Right ventricle myocardium superior (tissue), 1 donor: ENCODE measurements at regions of chr1 and their contacts with region 1.

Region 1: DNA sequence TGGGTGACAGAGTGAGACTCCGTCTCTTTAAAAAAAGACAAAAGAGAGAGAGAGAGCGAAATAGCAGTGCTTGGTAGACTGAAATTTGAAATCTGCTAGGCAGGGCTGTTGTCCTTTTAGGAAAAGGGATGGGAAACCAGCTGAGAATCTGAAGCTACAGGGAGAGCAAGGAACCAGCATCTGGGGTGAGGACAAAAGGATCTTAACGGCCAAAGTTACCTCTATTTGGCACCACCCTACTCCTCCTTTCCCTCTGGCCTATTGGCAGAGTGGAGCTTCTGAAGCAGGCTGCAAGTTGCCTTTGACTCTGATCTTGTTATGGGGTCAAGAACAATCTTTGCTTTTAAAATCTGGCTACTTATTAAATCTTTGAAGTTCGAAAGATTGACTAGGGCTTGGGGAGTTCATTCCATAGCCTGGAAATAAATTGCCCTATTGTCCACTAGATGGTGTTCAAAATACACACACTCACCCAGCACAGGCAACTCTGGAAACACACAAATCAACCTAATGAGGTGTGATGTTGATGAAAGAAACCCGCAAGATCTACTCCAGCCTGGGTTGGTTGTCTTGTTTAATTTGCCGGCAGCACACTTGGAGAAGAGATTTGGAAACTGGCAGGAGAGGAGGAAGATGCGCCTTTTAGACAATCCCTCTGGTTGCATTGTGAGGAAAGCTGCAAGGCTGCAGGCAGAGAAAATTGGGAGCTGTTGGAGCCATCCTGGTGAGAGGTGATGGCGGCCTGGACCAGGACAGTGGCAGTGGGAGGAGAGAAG is 16.5 kb upstream of the PARP1 start:
- DNase-seq: no peak
- ATAC-seq: peak; percentile 90

Region 2: GRCh38 chr1:226390326-226391080 is 33.9 kb before region 1 on chr1:
- intact Hi-C with region 1: no loop called
- DNase-seq: no peak
- ATAC-seq: no peak

Region 3: DNA sequence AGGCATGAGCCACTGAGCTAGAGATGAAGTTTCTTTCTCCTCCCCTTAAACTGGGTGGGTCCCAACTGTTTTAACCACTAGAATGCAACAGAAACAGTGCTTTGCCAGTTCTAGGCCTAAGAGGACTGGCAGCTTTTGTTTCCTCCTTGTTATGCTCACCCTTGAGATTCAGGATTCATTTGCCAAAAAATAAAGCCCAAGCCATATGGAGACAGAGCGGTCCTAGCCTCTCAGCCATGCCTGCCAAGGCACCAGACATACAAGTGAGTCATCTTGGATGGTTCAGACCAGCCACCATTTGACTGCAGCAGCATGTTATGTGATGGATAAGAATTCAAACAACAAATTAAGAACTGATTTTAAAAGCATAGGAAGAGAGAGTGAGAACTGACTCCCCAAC is 86.0 kb after region 1 on chr1:
- intact Hi-C with region 1: no loop called
- DNase-seq: no peak
- ATAC-seq: no peak

Region 4: DNA sequence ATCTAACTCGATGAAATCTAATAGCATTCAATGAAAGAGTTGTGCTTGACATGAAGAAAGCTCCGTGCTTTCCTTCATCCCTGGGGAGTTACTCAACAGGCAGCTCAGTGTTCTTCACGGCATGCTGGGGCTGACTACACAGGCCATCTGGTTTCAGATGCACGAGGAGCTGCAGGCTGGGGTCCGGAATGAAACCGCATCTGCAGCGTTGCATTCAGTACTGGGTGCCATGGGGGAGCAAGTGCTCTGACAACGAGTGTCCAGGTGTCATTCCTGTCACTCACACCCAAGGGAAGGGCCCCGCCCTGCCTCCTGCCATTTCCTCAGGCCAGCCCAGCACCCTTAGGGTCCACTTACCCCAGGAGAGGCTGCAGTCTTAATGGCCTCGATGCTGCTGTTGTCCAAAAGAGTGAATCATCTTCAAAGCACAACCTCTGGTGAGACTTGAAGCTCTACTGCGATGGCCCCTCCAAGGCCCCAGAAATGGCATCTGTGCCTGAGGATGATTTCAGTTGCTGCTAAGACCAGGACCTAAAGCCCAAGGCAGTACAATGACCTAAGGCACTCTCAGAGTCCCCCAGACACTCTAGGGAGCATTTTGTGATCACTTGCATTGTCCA is 185.5 kb after region 1 on chr1:
- intact Hi-C with region 1: loop called (anchors 5 kb)
- DNase-seq: no peak
- ATAC-seq: peak; percentile 78